Natural killer cell (primary cell): ENCODE measurements at regions of chr22 and their contacts with region 1.

Region 1: DNA sequence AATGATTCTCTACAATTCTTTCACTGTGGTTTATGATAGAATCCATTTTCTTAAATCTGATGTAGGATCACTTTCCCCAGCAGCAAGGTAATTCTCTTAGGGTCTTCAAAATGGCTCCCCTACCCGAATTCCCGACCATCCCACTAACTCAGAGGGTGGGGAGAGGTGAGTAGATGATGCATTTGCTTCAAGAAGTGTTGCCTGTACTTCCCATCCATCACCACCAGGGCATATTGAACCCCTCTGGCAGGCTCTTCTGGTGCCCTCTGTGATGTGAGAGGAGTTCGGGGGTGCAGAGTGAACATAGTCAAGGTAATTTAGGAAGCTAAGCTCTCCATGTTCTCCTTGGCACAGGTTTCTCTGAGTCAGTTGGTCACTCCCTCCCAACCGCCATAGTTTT is 52.3 kb downstream of the ZNRF3 start:
- DNase-seq: peak in 1 of 2 donors; percentile 10
- ATAC-seq: peak in 1 of 3 donors; percentile 32
- H3K4me3 ChIP-seq: no peak overlapping the region
- H3K4me3 Mint-ChIP-seq: no peak overlapping the region
- H3K27ac ChIP-seq: no peak overlapping the region
- H3K27ac Mint-ChIP-seq: no peak overlapping the region
- H3K4me1 ChIP-seq: no peaks in the 10 kb centered on the region
- H3K4me1 Mint-ChIP-seq: no peaks in the 10 kb centered on the region
- H3K27me3 ChIP-seq: peaks cover 7% of the 10 kb centered on the region
- H3K27me3 Mint-ChIP-seq: peaks cover 76 to 96% of the 10 kb centered on the region in 2 donors
- CTCF ChIP-seq: peak; percentile 43

Region 2: DNA sequence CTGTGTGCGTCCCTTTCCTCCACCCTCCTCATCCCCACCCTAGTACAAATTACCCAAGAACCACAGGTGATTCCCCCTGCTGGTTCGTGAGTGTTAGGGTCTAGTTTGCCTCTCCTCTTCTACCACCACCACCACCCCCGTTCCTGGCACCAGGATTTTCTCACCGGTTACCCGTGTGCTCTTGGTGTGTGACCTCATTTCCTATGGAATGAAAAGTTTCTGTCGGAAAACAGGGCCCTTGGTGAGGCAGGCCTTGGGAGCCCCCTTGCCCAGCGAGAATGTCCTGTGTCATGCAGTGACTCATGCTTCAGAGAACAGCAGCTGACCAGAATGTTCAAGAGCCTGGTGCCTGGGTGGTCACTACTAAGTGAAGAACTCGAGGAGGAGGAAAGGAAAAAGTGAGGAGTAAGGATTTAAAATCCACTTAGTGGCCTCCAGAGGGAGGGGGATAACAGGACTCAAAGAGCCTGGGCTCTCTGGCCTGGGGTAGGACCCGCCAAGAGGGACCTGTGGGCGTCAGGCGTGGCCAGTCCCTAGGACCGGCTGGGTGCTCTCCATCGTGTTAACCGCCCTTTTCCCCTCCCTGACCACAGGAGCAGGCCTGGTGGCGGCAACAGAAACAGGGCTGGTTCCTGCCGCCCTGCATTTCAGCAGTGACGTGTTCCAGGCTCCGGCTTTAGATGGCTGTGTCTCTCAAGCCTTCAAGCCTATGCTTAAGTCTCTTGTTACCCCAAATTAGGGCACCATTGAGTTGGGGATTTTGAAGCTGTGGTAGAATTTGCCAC is 95.7 kb after region 1 on chr22:
- intact Hi-C with region 1: loop called (anchors 5 kb)
- DNase-seq: peak; percentile 9 to 39
- ATAC-seq: peak; percentile 52 to 84 (median 75)
- H3K4me3 ChIP-seq: no peak overlapping the region
- H3K4me3 Mint-ChIP-seq: peak overlapping the region; percentile 72
- H3K27ac ChIP-seq: no peak overlapping the region
- H3K27ac Mint-ChIP-seq: peak overlapping the region in 1 of 2 donors; percentile 73
- H3K4me1 ChIP-seq: peaks cover 25% of the 10 kb centered on the region
- H3K4me1 Mint-ChIP-seq: peaks cover 20 to 26% of the 10 kb centered on the region in 2 donors
- H3K27me3 ChIP-seq: peaks cover 33% of the 10 kb centered on the region
- H3K27me3 Mint-ChIP-seq: peaks cover 51 to 71% of the 10 kb centered on the region in 2 donors
- CTCF ChIP-seq: no peak

Region 3: GRCh38 chr22:29524440-29525191 is 588.9 kb after region 1 on chr22:
- intact Hi-C with region 1: no loop called
- DNase-seq: peak; percentile 17 to 40
- ATAC-seq: peak; percentile 50 to 67 (median 57)
- H3K4me3 ChIP-seq: no peak overlapping the region
- H3K4me3 Mint-ChIP-seq: no peak overlapping the region
- H3K27ac ChIP-seq: no peak overlapping the region
- H3K27ac Mint-ChIP-seq: no peak overlapping the region
- H3K4me1 ChIP-seq: no peaks in the 10 kb centered on the region
- H3K4me1 Mint-ChIP-seq: no peaks in the 10 kb centered on the region
- H3K27me3 ChIP-seq: no peaks in the 10 kb centered on the region
- H3K27me3 Mint-ChIP-seq: no peaks in the 10 kb centered on the region
- CTCF ChIP-seq: no peak